Heart left ventricle (tissue), 16 donors: ENCODE measurements at regions of chr12 and their contacts with region 1.

Region 1: DNA sequence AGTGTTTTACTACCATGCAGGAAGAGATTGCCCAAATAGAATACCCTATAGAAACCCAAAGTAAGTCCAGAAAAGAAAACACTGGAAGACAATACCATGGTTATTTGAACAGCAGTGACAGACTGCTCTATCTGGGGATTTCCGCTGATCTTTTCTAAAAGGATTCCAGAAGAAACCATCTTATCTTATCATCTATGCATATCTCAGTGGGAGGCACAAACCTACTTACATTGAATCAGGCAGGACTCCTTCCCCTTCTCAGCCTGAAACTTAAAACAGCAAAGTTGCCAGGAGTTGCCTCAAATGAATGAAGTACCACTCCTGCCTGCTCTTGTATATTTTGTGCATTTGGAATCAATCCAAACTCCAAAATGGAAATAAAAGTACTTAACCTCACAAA is 56.7 kb upstream of the NR2C1 start:
- DNase-seq: no peak
- ATAC-seq: no peak
- H3K4me3 ChIP-seq: no peak overlapping the region
- H3K27ac ChIP-seq: no peak overlapping the region
- H3K4me1 ChIP-seq: peaks cover 0 to 22% (median 0%) of the 10 kb centered on the region in 12 donors
- H3K27me3 ChIP-seq: no peaks in the 10 kb centered on the region
- CTCF ChIP-seq: no peak
- POLR2A ChIP-seq: no peak

Region 2: DNA sequence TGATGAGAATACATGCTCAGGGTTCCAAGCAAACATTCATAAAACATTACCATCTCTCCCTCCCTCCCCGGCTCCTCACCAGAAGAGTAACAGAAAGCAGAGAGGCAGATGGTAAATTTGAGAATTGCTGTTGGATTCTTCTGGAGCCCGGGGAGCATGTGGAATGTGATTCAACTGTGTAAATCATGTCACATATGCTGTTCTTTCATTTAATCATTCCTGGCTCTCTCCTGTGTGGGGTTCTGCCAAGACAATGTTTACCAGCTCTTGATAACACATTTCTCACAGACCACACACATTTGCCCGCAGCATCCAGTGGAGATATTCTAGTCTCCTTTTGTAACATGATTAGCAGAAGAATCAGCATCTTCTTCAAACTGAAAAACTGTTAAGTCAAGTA is 33.2 kb before region 1 on chr12:
- intact Hi-C with region 1: no loop called
- DNase-seq: peak in 2 of 5 donors; percentile 15 to 27
- ATAC-seq: peak; percentile 50 to 81 (median 54)
- H3K4me3 ChIP-seq: no peak overlapping the region
- H3K27ac ChIP-seq: peak overlapping the region in 9 of 12 donors; percentile 1 to 84 (median 58)
- H3K4me1 ChIP-seq: peaks cover 0 to 34% (median 8%) of the 10 kb centered on the region in 12 donors
- H3K27me3 ChIP-seq: no peaks in the 10 kb centered on the region
- CTCF ChIP-seq: no peak
- POLR2A ChIP-seq: no peak

Region 3: DNA sequence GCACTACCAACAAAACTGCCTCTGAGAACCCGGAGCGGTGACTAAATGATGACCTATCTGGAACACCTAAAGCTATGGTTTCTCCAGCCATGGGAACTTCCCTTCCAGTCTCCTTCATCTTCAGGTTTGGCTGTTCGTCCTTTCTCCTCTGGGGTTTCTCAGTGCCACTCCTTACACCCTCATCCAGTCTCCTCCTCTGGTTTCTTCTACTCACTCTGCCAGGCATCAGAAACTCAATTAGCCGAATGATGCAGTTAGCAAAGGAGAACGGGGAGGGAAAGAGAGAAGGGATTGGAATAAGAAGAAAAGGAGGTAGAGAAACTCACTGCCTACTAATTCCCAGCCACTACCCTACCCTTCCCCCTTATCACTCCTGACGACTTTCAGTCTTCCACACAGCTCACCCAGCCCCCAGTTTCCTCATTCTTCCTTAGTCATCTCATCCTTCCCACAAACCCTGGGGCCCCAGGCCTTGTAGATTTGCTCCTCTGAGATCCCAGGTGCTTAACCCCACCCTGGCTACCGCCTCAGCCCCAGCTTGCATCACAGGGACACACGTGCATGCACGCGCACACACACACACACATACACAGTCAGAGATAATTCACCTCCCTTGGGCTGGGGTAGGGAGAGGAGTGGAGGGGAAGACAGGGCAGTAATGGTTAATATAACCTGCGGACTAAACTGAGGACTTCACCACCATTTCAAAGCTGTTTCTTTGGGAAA is 74.2 kb after region 1 on chr12:
- intact Hi-C with region 1: loop called in 1 of 10 experiments (anchors 10 kb)
- DNase-seq: peak in 1 of 5 donors; percentile 13
- ATAC-seq: peak in 3 of 4 donors; percentile 48 to 66 (median 63)
- H3K4me3 ChIP-seq: no peak overlapping the region
- H3K27ac ChIP-seq: peak overlapping the region; percentile 3 to 90 (median 60)
- H3K4me1 ChIP-seq: peaks cover 3 to 69% (median 49%) of the 10 kb centered on the region in 12 donors
- H3K27me3 ChIP-seq: no peaks in the 10 kb centered on the region
- CTCF ChIP-seq: no peak
- POLR2A ChIP-seq: no peak